ENCODE measurements at regions of chr6 and their contacts with region 1.

Region 1: GRCh38 chr6:152642989-152643388 is 5.8 kb upstream of the SYNE1 start:
- DNase-seq: peak in 1 of 3 donors; percentile 26
- ATAC-seq: peak; percentile 47
- H3K4me3 ChIP-seq: no peak overlapping the region
- H3K4me1 ChIP-seq: no peaks in the 10 kb centered on the region
- CTCF ChIP-seq: no peak

Region 2: GRCh38 chr6:151850479-151851003 is 792.4 kb before region 1 on chr6:
- intact Hi-C with region 1: no loop called
- DNase-seq: no peak
- ATAC-seq: no peak
- H3K4me3 ChIP-seq: no peak overlapping the region
- H3K4me1 ChIP-seq: no peaks in the 10 kb centered on the region
- CTCF ChIP-seq: no peak

Region 3: DNA sequence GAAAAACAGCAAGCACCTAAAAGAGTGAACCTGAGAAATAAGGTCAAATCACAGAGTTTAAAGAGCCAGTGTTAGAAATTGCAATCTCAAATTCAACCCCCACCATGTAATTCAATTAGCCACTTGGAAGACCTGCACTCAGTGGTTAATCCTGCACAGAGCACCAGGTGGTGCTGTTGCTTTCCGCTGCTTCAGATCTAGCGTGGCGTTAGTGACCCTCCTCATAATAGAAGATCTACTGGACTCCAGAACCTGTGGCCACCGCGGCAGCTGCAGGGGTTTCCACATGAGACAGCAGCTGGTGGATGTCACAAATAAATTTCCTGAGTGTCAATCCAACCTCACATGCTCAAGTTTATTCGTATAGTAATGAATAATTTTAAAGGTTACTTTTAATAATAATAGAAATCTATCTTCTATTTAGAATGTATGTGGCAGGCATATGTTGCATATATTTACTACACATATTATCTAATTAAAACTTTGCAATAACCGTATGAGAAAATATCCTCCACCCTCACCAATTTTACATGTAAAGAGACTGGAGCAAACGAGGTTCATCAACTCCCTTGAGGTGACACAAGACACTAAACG is 90.3 kb before region 1 on chr6:
- intact Hi-C with region 1: loop called in 1 of 2 experiments (anchors 10 kb)
- DNase-seq: peak; percentile 33 to 46 (median 36)
- ATAC-seq: peak; percentile 51
- H3K4me3 ChIP-seq: no peak overlapping the region
- H3K4me1 ChIP-seq: no peaks in the 10 kb centered on the region
- CTCF ChIP-seq: no peak

Measured in mucosa of descending colon (tissue), 3 donors.